Activated CD4-positive, alpha-beta T cell treated with anti-CD3 and anti-CD28 coated beads for 36 hours (primary cell): ENCODE measurements at regions of chr13 and their contacts with region 1.

Region 1: GRCh38 chr13:36282818-36283445 is 14.7 kb downstream of the CCDC169 start:
- DNase-seq: no peak
- ATAC-seq: no peak
- H3K4me3 Mint-ChIP-seq: no peak overlapping the region
- H3K27ac Mint-ChIP-seq: no peak overlapping the region
- H3K4me1 Mint-ChIP-seq: no peaks in the 10 kb centered on the region
- H3K27me3 Mint-ChIP-seq: peaks cover 14% of the 10 kb centered on the region

Region 2: DNA sequence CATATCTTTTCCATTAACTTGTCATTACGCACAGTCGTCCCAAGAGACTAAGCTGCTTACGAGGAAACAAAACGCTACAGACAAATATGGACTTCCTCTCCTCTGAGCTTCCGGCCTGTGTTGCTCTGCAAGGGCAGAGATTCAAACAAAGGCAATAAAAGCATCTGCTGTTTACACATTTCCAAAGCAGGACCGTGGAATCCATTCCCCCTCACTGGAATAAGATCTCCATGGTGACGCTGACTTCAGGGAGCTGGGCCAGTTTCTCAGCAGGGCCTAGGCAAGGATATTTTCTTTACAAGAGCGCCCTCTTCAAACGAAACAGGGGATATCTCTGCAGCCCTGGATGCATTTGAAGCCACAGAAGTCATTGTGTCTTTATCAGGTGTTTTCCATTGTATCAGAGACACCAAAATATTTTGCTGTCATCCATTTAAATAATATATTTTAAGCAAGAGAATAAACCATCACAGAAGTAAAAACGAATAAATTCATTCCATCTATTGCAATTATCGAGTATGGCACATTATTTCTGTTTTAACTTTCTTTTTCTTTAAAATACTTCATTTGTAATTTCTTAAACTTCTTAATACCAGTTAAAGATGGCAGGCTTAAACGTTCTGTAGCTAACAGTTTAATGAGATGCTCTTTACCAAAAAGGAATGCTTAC is 329.3 kb before region 1 on chr13:
- CTCF ChIA-PET with region 1: no interaction called
- POLR2A ChIA-PET with region 1: no interaction called
- intact Hi-C with region 1: no loop called
- DNase-seq: no peak
- ATAC-seq: no peak
- H3K4me3 Mint-ChIP-seq: no peak overlapping the region
- H3K27ac Mint-ChIP-seq: no peak overlapping the region
- H3K4me1 Mint-ChIP-seq: no peaks in the 10 kb centered on the region
- H3K27me3 Mint-ChIP-seq: no peaks in the 10 kb centered on the region

Region 3: DNA sequence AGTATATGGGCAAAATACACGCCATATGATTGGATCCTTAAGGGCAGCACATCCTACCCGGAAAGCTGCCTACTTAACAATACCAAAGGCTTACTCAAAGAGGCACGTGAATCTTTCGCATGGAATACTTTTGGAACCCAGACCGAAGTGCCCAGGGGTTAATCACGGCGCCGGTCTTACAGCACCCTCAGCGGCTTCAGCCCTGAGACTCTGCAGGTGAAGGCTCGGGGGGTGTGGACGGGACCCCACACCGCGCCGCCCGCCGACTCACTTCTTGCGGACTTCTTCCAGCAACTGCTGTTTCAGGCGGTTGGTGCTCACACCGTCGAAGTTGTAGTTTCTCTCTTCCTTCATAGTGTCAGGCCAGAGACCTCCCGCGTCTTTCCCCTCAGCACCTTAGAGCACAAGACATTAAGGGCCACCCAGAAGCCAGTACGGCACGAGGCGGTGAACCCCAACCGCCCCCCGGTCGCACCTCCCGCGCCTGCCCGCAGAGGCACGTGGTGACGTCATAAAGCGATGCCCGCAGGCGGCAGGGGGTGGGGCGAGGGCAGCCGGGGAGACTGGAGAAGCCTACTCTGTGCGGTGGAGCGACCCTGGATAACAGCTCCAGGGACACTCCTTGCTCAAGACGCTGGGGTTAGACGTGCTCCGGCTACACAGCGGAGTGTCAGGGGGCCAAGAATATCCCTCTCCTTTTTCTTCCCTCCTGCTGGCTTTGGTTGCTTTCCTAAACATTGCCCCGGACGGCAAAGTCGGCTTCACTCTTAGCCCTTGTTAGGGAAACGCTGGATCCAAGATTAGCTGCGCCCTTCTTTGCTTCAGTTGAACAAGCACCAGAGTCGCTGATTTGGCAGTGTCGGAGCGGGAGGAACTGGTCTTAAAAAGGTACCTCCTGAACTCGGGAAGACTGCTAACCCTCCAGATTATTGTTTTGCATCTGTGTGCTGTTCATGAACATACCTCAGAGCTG is 14.7 kb after region 1 on chr13 and contains the start of gene CCDC169:
- CTCF ChIA-PET with region 1: interaction called, 15 read pairs
- POLR2A ChIA-PET with region 1: interaction called, 3 read pairs
- intact Hi-C with region 1: no loop called
- DNase-seq: peak; percentile 80
- ATAC-seq: peak; percentile 87
- H3K4me3 Mint-ChIP-seq: peak within 1 kb of the TSS; percentile 79
- H3K27ac Mint-ChIP-seq: peak within 1 kb of the TSS; percentile 61
- H3K4me1 Mint-ChIP-seq: peaks cover 15% of the 10 kb centered on the region
- H3K27me3 Mint-ChIP-seq: peaks cover 34% of the 10 kb centered on the region
- total RNA-seq, gene CCDC169: 0.30 TPM

Region 4: GRCh38 chr13:36395280-36395679 is 112.3 kb after region 1 on chr13:
- CTCF ChIA-PET with region 1: no interaction called
- POLR2A ChIA-PET with region 1: no interaction called
- intact Hi-C with region 1: loop called (anchors 2 to 5 kb)
- DNase-seq: no peak
- ATAC-seq: peak; percentile 44
- H3K4me3 Mint-ChIP-seq: no peak overlapping the region
- H3K27ac Mint-ChIP-seq: no peak overlapping the region
- H3K4me1 Mint-ChIP-seq: no peaks in the 10 kb centered on the region
- H3K27me3 Mint-ChIP-seq: peaks cover 5% of the 10 kb centered on the region

Region 5: GRCh38 chr13:36420437-36420891 is 137.5 kb after region 1 on chr13:
- CTCF ChIA-PET with region 1: interaction called, 4 read pairs
- POLR2A ChIA-PET with region 1: no interaction called
- intact Hi-C with region 1: loop called in 1 of 2 experiments (anchors 10 kb)
- DNase-seq: peak; percentile 82
- ATAC-seq: peak; percentile 74
- H3K4me3 Mint-ChIP-seq: no peak overlapping the region
- H3K27ac Mint-ChIP-seq: peak overlapping the region; percentile 75
- H3K4me1 Mint-ChIP-seq: peaks cover 27% of the 10 kb centered on the region
- H3K27me3 Mint-ChIP-seq: peaks cover 48% of the 10 kb centered on the region

Region 6: GRCh38 chr13:36736119-36736726 is 453.3 kb after region 1 on chr13:
- CTCF ChIA-PET with region 1: interaction called, 11 read pairs
- POLR2A ChIA-PET with region 1: no interaction called
- intact Hi-C with region 1: loop called (anchors 2 to 5 kb)
- DNase-seq: peak; percentile 57
- ATAC-seq: no peak
- H3K4me3 Mint-ChIP-seq: no peak overlapping the region
- H3K27ac Mint-ChIP-seq: no peak overlapping the region
- H3K4me1 Mint-ChIP-seq: no peaks in the 10 kb centered on the region
- H3K27me3 Mint-ChIP-seq: peaks cover 5% of the 10 kb centered on the region